Motor neuron (in vitro differentiated cells): ENCODE measurements at regions of chr16 and their contacts with region 1.

Region 1: DNA sequence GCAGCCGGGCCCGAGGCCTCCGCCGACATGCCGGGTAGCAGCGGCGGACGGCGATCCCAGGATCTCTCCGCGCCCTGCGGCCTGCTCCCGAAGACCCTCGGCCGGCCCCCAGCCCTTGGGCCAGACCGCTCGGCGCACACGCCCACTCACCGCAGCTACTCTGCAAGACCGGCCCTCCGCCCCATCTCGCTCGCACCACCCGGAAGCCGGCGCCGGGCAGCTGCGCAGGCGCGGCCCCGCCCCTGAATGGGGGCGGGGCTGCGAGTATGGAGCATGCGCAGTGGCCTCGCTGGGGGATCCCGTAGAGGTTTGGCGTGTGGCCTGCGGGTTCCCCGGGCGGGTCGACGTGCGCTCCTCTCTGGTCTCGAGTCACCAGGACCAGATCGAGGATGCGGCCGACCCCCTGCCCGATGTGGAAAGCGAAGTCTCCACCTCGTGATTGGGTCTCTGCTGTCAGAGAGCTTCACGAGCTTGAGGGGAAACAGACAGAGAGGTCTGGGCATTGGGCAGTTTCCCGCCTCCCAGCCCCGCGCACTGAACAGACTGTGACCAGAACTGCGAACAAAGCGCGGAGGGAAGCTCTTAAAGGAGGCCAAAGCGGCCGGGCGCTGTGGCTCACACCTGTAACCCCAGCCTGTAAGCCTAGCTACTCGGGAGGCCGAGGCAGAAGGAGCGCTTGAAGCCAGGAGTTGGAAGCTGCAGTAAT is at the start of gene KCTD13:
- ATAC-seq: peak; percentile 87 to 95 (median 94)
- H3K4me3 ChIP-seq: peak within 1 kb of the TSS; percentile 63 to 92 (median 74)
- H3K27ac ChIP-seq: peak within 1 kb of the TSS; percentile 74 to 80
- H3K4me1 ChIP-seq: peaks cover 17 to 22% of the 10 kb centered on the region in 2 donors
- total RNA-seq, gene KCTD13: 9.1 to 82.6 (median 15.2) TPM

Region 2: GRCh38 chr16:29877266-29877961 is 48.7 kb before region 1 on chr16:
- in situ Hi-C with region 1: loop called in 1 of 9 experiments (anchors 10 kb)
- ATAC-seq: peak; percentile 84 to 97 (median 93)
- H3K4me3 ChIP-seq: peak overlapping the region in 3 of 5 donors; percentile 8 to 26 (median 15)
- H3K27ac ChIP-seq: no peak overlapping the region
- H3K4me1 ChIP-seq: no peaks in the 10 kb centered on the region